ENCODE measurements at regions of chr3 and their contacts with region 1.

Region 1: DNA sequence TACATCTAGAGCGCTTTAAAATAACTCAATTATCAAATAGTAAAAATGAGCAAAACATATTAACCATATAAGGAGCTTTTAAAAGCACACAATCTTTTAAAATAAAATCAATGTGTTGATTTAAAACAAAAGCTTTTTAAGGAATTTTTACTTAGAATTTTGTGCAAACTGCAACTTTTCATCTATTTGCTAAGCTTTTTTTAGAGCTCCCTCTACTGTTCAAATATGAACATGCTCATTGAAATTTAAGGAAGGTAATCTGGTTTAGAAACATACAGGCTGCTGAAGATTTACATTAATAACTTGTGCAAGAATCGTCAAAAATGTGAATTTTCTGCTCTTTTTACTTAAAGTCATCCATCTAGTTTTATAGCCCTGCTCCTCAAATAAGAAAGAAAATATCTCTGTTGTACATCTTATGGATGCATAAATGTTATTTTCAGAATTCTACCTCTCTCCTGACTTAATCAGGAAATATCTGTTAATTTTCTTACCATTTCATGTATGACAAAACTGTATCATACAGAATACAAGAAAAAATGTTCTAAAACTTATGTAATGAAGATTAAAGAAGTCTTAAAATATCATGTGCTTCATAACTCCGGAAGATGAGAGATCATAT is 469.4 kb upstream of the ROBO2 start:
- DNase-seq: no peak
- H3K4me3 ChIP-seq: no peak overlapping the region
- H3K27ac ChIP-seq: no peak overlapping the region
- H3K27me3 ChIP-seq: no peaks in the 10 kb centered on the region
- CTCF ChIP-seq: peak; percentile 55 to 86 (median 72)

Region 2: DNA sequence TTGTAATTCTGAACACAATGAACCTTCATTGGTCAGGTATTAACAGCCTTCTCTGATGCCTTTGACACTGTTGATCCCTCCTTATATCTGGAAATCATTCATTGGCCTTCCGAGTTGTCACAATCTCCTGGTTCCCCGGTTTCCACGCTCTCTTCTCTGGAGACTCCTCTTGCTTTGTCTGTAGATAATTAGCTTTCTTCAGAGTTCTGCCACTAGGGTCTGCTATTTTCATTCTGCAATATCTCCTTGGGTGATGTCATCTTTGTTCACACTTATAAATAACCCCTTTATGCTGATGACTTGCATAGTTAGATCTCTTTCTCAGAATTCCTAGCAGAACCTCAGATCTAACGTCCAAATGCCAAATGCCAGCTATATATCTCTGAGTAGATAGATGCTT is 201.4 kb before region 1 on chr3:
- intact Hi-C with region 1: loop called in 1 of 2 experiments (anchors 5 kb)
- DNase-seq: no peak
- H3K4me3 ChIP-seq: no peak overlapping the region
- H3K27ac ChIP-seq: no peak overlapping the region
- H3K27me3 ChIP-seq: no peaks in the 10 kb centered on the region
- CTCF ChIP-seq: peak in 50 of 56 donors; percentile 11 to 60 (median 40)

Region 3: GRCh38 chr3:76438971-76439370 is 131.6 kb before region 1 on chr3:
- intact Hi-C with region 1: no loop called
- DNase-seq: no peak
- H3K4me3 ChIP-seq: no peak overlapping the region
- H3K27ac ChIP-seq: no peak overlapping the region
- H3K27me3 ChIP-seq: no peaks in the 10 kb centered on the region
- CTCF ChIP-seq: no peak

Measured in dorsolateral prefrontal cortex (tissue), 120 donors.